ENCODE measurements at regions of chr1 and their contacts with region 1.

Region 1: DNA sequence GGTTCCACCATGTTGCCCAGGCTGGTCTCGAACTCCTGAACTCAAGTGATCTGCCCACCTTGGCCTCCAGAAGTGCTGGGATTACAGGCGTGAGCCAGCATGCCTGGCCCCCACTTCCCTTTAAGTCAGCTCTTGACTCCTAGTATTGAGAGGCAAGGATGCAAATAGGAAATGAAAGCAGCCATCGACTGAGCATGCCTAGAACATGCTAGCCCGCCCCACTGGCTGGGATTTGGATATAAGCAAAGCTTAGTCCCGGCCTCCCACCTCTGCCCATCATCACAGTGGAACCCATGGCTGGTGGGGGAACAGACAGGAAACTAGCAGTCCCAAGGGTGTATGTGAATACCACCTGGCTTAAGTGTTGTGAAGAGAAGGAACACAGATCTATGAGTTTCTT is 10.5 kb downstream of the C1orf167 start:
- DNase-seq: no peak
- H3K4me3 ChIP-seq: no peak overlapping the region
- H3K27ac ChIP-seq: no peak overlapping the region
- H3K4me1 ChIP-seq: no peaks in the 10 kb centered on the region
- H3K27me3 ChIP-seq: no peaks in the 10 kb centered on the region
- CTCF ChIP-seq: no peak

Region 2: GRCh38 chr1:11448375-11449099 is 323.9 kb before region 1 on chr1:
- CTCF ChIA-PET with region 1: no interaction called
- dilution Hi-C with region 1: loop called (anchors 10 kb)
- in situ Hi-C with region 1: no loop called
- intact Hi-C with region 1: no loop called
- DNase-seq: no peak
- H3K4me3 ChIP-seq: no peak overlapping the region
- H3K27ac ChIP-seq: no peak overlapping the region
- H3K4me1 ChIP-seq: no peaks in the 10 kb centered on the region
- H3K27me3 ChIP-seq: no peaks in the 10 kb centered on the region
- CTCF ChIP-seq: no peak

Region 3: GRCh38 chr1:11784993-11785769 is 12.7 kb after region 1 on chr1:
- CTCF ChIA-PET with region 1: no interaction called
- dilution Hi-C with region 1: no loop called
- in situ Hi-C with region 1: no loop called
- intact Hi-C with region 1: no loop called
- DNase-seq: peak; percentile 27
- H3K4me3 ChIP-seq: peak overlapping the region in 1 of 3 experiments; percentile 39
- H3K27ac ChIP-seq: no peak overlapping the region
- H3K4me1 ChIP-seq: peaks cover 10% of the 10 kb centered on the region
- H3K27me3 ChIP-seq: no peaks in the 10 kb centered on the region
- CTCF ChIP-seq: peak; percentile 64 to 87

Region 4: GRCh38 chr1:11813021-11813420 is 40.6 kb after region 1 on chr1:
- CTCF ChIA-PET with region 1: no interaction called
- dilution Hi-C with region 1: no loop called
- in situ Hi-C with region 1: no loop called
- intact Hi-C with region 1: no loop called
- DNase-seq: no peak
- H3K4me3 ChIP-seq: no peak overlapping the region
- H3K27ac ChIP-seq: no peak overlapping the region
- H3K4me1 ChIP-seq: peaks cover 3% of the 10 kb centered on the region
- H3K27me3 ChIP-seq: no peaks in the 10 kb centered on the region
- CTCF ChIP-seq: no peak